Calu3 (cell line): ENCODE measurements at regions of chr1 and their contacts with region 1.

Region 1: DNA sequence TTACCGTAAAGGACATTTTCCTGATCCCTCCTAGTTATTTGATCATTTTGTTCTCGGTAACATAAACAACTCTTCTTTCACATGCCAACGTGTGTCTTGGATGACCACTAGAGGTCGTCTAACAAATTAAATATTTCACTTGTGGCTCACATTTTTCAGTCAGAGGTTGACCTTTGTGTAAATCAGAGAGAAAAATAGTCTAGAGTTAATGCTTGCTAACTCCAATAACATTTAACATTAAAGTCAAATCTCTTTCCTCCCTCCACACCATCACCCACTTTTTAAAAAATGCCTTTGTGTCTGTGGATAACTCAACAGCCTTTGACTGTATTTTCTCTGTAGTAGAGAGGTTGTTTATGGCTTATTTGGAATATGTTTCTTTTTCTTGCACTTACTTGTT is 220.5 kb upstream of the B3GALT2 start:
- DNase-seq: no peak
- H3K4me3 Mint-ChIP-seq: no peak overlapping the region
- H3K27ac Mint-ChIP-seq: peak overlapping the region; percentile 23
- H3K4me1 Mint-ChIP-seq: peaks cover 57% of the 10 kb centered on the region
- H3K27me3 Mint-ChIP-seq: no peaks in the 10 kb centered on the region
- CTCF ChIP-seq: peak; percentile 49

Region 2: GRCh38 chr1:193355179-193355578 is 51.7 kb before region 1 on chr1:
- CTCF ChIA-PET with region 1: no interaction called
- intact Hi-C with region 1: loop called (anchors 5 kb)
- DNase-seq: peak; percentile 22
- H3K4me3 Mint-ChIP-seq: peak overlapping the region; percentile 27
- H3K27ac Mint-ChIP-seq: peak overlapping the region; percentile 91
- H3K4me1 Mint-ChIP-seq: peaks cover 43% of the 10 kb centered on the region
- H3K27me3 Mint-ChIP-seq: no peaks in the 10 kb centered on the region
- CTCF ChIP-seq: no peak

Region 3: DNA sequence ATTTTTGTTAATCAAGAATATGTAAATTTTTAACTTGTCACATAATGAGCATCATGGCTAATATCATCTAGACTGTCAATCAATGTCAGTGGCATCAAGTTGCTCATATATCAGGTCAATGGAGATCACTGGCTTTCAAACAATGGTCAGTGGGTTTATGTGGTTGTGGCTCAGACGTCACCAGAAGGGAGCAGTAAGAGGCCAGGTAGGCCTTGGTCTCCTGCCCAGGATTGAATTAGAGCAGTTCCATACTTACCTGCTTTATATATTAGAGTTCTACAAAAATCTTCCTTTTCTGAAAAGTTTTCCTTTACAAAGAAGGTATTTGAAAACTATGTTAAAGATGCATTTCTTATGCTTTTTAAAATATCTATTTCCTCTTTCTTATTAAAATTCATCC is 14.2 kb before region 1 on chr1:
- CTCF ChIA-PET with region 1: no interaction called
- intact Hi-C with region 1: no loop called
- DNase-seq: no peak
- H3K4me3 Mint-ChIP-seq: no peak overlapping the region
- H3K27ac Mint-ChIP-seq: no peak overlapping the region
- H3K4me1 Mint-ChIP-seq: no peaks in the 10 kb centered on the region
- H3K27me3 Mint-ChIP-seq: no peaks in the 10 kb centered on the region
- CTCF ChIP-seq: no peak

Region 4: DNA sequence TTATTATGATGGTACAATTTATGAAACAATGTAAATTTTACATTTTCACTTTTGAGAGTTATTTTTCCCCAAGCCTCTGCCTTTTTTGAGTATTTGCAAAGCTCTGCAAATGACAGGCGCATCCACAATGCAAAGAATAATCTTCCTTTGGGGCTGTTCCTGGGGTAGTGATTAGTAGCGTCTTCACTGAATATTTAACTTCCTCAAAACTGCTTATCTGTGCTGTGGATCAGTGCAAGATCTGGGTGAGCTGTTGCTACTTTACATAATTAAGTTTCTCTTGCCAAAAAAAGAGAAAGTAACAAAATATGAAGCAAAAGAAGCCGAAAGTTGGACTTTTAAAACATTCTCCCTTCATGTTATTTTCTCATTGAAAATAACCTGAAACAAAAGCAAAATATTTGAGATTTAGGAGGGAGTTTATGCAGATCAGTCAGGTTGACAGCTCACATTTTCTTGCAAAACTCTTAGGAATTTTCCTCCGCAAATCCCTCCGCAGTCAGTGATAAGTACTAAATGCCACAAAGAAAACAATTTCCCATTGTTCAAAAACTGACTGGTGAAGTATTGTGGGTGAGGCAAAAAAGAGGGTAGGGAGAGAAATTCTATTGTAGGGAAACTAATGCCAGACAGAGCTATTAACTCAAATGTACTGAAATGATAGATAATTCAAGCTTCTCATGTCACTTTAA is 55.9 kb after region 1 on chr1:
- CTCF ChIA-PET with region 1: no interaction called
- intact Hi-C with region 1: loop called (anchors 2 kb)
- DNase-seq: peak; percentile 49
- H3K4me3 Mint-ChIP-seq: no peak overlapping the region
- H3K27ac Mint-ChIP-seq: no peak overlapping the region
- H3K4me1 Mint-ChIP-seq: peaks cover 21% of the 10 kb centered on the region
- H3K27me3 Mint-ChIP-seq: no peaks in the 10 kb centered on the region
- CTCF ChIP-seq: no peak

Region 5: DNA sequence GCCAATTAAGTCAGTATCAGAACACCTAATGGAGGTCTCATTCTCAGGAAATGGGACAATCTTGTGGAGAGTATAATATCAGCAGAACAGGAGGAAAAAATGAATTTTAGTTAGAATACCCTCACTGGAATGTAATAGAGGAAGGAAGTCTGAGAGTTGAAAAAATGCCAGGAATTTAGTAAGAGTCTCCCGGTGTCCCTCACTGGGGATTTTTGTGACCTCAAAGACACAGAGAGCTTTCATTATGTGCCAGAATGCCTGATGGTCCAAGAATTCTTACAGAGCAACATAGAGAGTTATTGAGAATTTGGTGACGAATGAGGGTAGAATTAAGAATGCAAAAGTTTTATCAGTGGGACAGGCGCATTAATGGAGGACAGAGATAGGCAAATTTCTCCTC is 223.0 kb after region 1 on chr1:
- CTCF ChIA-PET with region 1: no interaction called
- intact Hi-C with region 1: loop called (anchors 5 kb)
- DNase-seq: no peak
- H3K4me3 Mint-ChIP-seq: peak overlapping the region; percentile 37
- H3K27ac Mint-ChIP-seq: peak overlapping the region; percentile 42
- H3K4me1 Mint-ChIP-seq: peaks cover 22% of the 10 kb centered on the region
- H3K27me3 Mint-ChIP-seq: no peaks in the 10 kb centered on the region
- CTCF ChIP-seq: no peak

Region 6: GRCh38 chr1:193754732-193755427 is 348.0 kb after region 1 on chr1:
- CTCF ChIA-PET with region 1: no interaction called
- intact Hi-C with region 1: loop called (anchors 10 kb)
- DNase-seq: no peak
- H3K4me3 Mint-ChIP-seq: no peak overlapping the region
- H3K27ac Mint-ChIP-seq: no peak overlapping the region
- H3K4me1 Mint-ChIP-seq: no peaks in the 10 kb centered on the region
- H3K27me3 Mint-ChIP-seq: no peaks in the 10 kb centered on the region
- CTCF ChIP-seq: peak; percentile 24

Region 7: DNA sequence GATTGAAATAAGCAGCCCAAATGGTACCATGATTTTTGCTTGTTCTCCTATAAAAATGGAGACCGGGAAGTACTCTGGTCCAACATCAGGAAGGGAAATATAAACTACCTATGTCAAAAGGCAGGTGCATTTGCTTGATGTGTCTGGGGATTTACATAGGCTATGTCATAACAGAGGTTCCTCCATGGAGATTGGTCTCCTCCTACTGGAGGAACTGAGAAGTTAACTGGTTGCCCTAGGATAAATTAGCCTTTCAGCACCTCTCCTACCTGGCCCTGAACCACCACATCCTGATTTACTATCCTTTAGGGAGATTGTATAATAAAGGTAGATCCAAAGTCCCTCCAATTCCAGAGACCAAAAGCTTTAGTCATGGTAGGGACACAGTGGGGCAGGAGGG is 888.8 kb after region 1 on chr1:
- CTCF ChIA-PET with region 1: no interaction called
- intact Hi-C with region 1: loop called (anchors 2 kb)
- DNase-seq: peak; percentile 51
- H3K4me3 Mint-ChIP-seq: no peak overlapping the region
- H3K27ac Mint-ChIP-seq: no peak overlapping the region
- H3K4me1 Mint-ChIP-seq: peaks cover 10% of the 10 kb centered on the region
- H3K27me3 Mint-ChIP-seq: no peaks in the 10 kb centered on the region
- CTCF ChIP-seq: peak; percentile 69